ENCODE measurements at regions of chr6 and their contacts with region 1.

Region 1: DNA sequence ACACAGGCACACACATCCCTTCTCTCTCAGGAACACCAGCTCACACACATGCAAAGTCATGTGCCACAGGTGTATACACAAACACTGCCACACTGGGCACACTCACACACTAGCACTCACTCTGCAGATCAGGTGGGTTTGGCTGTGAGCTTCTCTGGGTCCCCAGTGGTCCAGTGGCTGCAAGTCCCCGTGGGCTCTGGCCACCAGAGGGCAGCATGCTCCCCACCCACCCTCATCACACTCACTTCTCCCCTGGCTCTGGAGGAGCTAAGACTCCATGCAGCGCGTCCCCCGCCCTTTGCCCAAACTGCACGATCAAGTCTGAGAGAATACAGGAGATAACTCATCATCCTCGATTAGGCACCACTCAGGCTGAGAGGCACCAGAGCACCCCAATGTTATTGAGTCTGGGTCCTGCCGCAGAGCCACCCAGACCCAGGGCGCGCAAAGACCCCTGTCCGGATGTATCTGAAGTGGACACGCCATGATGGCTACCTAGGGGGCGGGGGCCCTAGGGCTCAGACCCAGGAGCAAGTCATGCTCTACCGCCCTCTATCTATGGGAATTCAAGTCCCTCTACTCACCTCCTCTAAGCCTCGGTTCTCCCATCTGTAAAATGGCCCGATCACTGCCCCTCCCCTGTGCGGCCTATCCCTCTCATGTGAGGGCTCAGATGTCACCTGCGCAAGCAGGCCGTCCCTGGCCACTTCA is 90.5 kb downstream of the GRM4 start:
- DNase-seq: peak; percentile 77
- ATAC-seq: peak; percentile 68

Region 2: DNA sequence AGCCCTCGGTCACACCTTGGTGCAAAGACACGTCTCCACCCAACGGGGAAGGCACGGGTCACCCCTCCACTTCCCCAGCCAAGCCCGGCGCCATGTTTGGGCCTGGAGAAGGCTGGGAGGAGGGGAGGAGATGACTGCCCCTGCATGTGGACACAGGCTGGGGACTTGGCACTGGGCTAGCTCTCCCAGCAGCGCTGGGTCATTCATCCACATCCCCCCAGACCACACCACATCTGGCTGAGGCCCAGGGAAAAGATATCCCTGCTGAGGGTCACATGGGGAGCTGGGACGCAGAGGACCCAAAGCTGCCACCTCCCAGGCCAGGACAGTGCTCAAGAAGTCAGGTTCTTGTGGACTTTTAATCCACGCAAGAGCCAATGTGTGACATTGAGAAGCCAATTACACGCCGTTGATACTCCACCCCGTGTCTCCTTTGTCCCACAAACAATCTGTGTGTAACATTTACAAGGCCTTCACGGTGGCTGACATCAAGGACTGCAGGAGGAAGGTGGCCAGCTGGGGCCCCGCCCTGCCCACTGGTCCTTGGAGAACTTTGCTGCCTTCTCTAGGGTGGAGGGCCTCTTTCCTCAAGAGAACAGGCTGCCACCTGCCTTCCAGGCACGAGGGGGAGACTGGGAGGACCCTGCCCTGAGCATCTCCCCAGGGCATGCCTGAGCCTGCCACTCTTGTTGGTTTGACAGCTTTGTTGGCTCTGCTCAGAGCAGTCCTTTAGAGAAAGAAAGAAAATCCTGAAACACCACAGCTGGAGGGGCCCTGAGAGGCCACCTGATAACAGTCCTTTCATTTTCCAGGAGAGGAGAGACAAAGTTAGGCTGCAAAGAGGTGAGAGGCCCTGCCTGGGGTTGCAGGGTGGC is 303.4 kb before region 1 on chr6:
- intact Hi-C with region 1: no loop called
- DNase-seq: no peak
- ATAC-seq: no peak

Region 3: DNA sequence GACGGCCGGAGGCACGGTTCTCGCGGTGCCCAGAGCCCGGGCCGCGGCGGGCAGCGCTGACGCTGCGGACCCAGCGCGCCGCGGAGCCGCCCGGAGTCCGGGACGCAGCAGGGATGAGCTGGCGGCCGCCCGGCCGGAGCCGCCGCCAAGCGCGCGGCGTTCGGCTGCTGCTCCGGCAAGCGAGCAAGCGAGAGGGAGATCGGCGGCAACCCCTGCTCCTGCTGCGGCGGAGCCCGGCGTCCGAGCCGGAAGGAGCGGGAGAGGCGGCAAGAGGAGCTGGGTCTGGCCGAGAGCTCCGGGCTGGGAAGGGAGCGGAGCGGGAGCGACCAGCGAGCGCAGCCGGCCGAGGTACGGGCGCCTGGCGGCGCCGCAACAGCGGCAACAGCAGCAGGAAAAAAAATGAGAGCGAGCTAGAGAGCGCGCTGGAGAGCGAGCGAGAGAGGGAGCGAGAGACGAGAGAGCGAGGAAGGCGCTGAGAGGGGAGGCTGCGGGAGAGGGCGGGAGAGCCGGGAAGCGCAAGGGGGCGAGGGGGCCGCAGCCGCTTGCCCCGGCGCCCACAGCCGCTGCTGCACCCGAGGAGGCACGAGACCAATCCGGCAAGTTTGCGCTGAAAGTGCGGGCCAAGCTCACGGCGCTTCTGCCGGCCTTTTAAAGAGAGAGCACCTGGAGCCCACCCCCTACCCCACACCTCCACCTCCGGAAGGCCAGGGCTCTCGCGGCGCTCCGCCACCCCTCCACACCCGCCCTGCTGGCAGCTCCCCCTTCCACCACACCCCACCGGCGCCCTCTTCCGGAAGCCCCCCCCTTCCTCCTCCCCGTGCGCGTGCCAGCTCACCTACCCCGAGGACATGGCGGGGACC is 90.0 kb after region 1 on chr6:
- intact Hi-C with region 1: loop called (anchors 10 kb)
- DNase-seq: no peak
- ATAC-seq: peak; percentile 65

Region 4: GRCh38 chr6:34315780-34316179 is 260.4 kb after region 1 on chr6:
- intact Hi-C with region 1: no loop called
- DNase-seq: no peak
- ATAC-seq: no peak

Measured in left ventricle myocardium superior (tissue), 1 donor.